AG04449 (cell line): ENCODE measurements at regions of chr1 and their contacts with region 1.

Region 1: DNA sequence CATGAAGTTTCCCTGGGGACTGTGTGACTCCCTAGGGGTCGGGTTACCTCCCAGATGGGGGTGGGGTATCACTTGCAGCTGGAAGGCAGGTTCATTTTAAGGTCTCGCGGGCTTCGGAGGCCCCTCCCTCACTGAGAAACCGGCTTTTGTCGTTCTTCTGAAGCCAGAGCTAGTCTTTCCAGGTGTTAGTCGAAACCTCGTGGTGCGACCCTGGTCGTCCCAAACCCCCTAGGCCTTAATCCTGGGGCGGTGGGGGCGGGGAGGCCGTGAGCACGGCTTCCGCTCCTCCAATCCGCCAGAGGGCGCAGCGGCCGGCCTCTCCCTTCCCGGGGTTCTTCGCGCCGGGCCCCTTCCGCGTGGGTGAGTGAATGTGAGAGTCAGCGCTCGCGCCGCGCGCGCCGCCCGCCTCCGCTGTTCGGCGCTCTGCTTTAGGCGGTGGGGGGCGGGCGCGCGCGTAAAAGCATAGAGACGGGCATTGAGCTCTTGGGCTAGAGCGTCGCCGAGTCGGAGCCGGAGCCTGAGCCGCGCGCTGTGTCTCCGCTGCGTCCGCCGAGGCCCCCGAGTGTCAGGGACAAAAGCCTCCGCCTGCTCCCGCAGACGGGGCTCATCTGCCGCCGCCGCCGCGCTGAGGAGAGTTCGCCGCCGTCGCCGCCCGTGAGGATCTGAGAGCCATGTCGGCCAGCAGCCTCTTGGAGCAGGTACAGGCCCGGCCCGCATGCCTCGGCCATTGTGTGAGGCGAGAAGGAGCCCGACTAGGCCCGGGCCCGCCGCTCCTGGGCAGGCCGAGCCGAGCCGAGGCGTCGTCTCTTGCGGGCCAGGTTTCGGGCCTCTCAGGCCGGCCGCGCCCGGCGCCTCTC is at the start of gene YTHDF2:
- DNase-seq: peak; percentile 59
- H3K4me3 ChIP-seq: peak within 1 kb of the TSS; percentile 63
- CTCF ChIP-seq: peak; percentile 97

Region 2: GRCh38 chr1:28642847-28643635 is 93.6 kb before region 1 on chr1 and contains the start of gene TAF12:
- CTCF ChIA-PET with region 1: interaction called, 10 read pairs
- POLR2A ChIA-PET with region 1: interaction called, 26 read pairs
- DNase-seq: peak; percentile 60
- H3K4me3 ChIP-seq: peak within 1 kb of the TSS; percentile 97
- CTCF ChIP-seq: peak; percentile 39

Region 3: DNA sequence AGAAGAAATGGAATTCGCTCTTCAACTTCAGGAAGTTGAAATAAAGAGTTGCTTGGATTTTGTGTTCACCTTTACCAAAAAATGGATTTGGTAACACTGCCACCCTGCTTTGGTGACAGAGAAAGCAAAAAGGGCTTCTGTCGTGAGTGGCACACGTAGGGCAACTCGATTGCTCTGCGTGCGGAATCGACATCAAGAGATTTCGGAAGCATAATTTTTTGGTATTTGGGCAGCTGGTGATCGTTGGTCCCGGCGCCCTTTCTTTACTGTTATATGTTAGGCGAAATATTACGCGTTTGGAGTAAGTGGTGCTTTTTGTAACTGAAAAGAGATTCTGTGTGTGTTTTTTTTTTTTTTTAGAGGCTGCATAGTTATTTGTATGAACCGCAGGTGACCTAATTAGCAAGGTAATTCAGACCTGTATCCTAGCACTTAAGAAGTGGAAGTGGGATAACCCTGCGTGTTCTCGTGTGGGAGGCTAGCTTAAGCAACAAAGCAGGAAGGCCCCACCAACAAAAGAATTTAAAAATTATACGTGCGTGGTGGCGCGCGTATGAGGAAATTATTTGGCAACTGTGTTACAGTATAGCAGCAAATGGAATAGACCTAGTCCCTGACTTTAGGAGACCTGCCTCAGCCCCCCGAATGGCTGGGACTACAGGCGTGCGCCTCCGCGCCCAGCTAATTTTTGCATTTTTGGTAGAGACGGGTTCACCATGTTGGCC is 88.0 kb before region 1 on chr1 and contains the start of gene RNU11:
- CTCF ChIA-PET with region 1: interaction called, 10 read pairs
- POLR2A ChIA-PET with region 1: interaction called, 26 read pairs
- DNase-seq: peak; percentile 95
- H3K4me3 ChIP-seq: peak within 1 kb of the TSS; percentile 57
- CTCF ChIP-seq: no peak

Region 4: GRCh38 chr1:28703629-28704028 is 33.0 kb before region 1 on chr1:
- CTCF ChIA-PET with region 1: interaction called, 21 read pairs
- POLR2A ChIA-PET with region 1: no interaction called
- DNase-seq: no peak
- H3K4me3 ChIP-seq: no peak overlapping the region
- CTCF ChIP-seq: no peak

Region 5: GRCh38 chr1:28718586-28719331 is 17.9 kb before region 1 on chr1:
- CTCF ChIA-PET with region 1: interaction called, 91 read pairs
- POLR2A ChIA-PET with region 1: interaction called, 9 read pairs
- DNase-seq: no peak
- H3K4me3 ChIP-seq: no peak overlapping the region
- CTCF ChIP-seq: no peak

Region 6: GRCh38 chr1:28751315-28752060 is 14.8 kb after region 1 on chr1:
- CTCF ChIA-PET with region 1: interaction called, 41 read pairs
- POLR2A ChIA-PET with region 1: interaction called, 8 read pairs
- DNase-seq: no peak
- H3K4me3 ChIP-seq: no peak overlapping the region
- CTCF ChIP-seq: no peak

Region 7: GRCh38 chr1:28756846-28757245 is 20.2 kb after region 1 on chr1:
- CTCF ChIA-PET with region 1: interaction called, 33 read pairs
- POLR2A ChIA-PET with region 1: interaction called, 3 read pairs
- DNase-seq: no peak
- H3K4me3 ChIP-seq: no peak overlapping the region
- CTCF ChIP-seq: no peak

Region 8: GRCh38 chr1:28782011-28782410 is 45.3 kb after region 1 on chr1:
- CTCF ChIA-PET with region 1: no interaction called
- POLR2A ChIA-PET with region 1: no interaction called
- DNase-seq: no peak
- H3K4me3 ChIP-seq: no peak overlapping the region
- CTCF ChIP-seq: no peak

Region 9: GRCh38 chr1:28830814-28831213 is 94.1 kb after region 1 on chr1:
- CTCF ChIA-PET with region 1: no interaction called
- POLR2A ChIA-PET with region 1: no interaction called
- DNase-seq: no peak
- H3K4me3 ChIP-seq: no peak overlapping the region
- CTCF ChIP-seq: no peak

Region 10: DNA sequence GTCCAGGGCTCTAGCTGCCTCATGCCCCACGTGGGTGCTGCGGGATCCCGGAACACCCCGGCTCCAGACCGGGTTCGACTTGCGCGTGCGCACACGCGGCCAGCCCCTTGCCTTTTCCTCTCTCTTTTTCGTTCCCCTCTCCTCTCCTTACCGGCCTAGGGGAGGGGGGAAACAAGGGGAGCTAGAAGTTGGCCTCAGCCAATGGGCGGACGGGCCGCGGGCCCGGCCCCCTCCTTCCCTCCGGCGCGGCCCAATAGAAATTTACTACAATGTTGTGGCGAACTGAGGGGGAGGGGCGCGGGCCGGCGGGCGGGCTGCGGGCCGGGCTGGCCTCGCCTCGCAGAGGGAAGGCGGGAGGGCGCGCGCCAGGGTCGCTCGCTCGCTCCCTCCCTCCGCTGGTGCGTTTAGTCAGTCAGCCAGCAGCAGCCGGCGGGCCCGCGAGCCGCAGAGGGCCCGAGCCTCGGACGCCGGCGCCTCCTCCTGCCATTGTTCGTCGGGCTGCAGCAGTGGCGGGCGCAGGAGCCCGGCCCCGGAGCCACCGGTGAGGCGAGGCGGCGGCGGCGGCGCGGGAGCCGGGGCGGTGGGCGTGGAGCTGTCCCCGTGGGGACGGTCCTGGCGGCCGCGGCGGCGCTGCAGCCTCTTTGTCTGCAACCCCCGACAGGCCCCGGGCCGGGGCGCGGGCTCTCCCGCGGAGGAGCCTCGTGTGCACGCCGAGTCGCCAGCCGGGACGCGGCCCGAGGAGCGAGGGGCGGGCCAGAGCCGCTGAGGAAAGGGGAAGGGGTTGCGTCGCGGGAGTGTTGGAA is 177.8 kb after region 1 on chr1 and contains the start of gene EPB41:
- CTCF ChIA-PET with region 1: no interaction called
- POLR2A ChIA-PET with region 1: no interaction called
- DNase-seq: no peak
- H3K4me3 ChIP-seq: peak within 1 kb of the TSS; percentile 69
- CTCF ChIP-seq: no peak